ENCODE measurements at regions of chr13 and their contacts with region 1.

Region 1: GRCh38 chr13:27620377-27621115 is at the start of gene LNX2:
- DNase-seq: peak; percentile 97
- H3K4me3 Mint-ChIP-seq: peak within 1 kb of the TSS; percentile 88
- H3K27ac Mint-ChIP-seq: peak within 1 kb of the TSS; percentile 88
- H3K4me1 Mint-ChIP-seq: peaks cover 57% of the 10 kb centered on the region
- H3K27me3 Mint-ChIP-seq: no peaks in the 10 kb centered on the region
- total RNA-seq, gene LNX2: 4.1 and 4.5 TPM in 2 replicates

Region 2: GRCh38 chr13:26253787-26254582 is 1366.6 kb before region 1 on chr13 and contains the start of gene CDK8:
- intact Hi-C with region 1: loop called (anchors 5 kb)
- DNase-seq: peak; percentile 80
- H3K4me3 Mint-ChIP-seq: peak within 1 kb of the TSS; percentile 91
- H3K27ac Mint-ChIP-seq: peak within 1 kb of the TSS; percentile 88
- H3K4me1 Mint-ChIP-seq: peaks cover 25% of the 10 kb centered on the region
- H3K27me3 Mint-ChIP-seq: peaks cover 2% of the 10 kb centered on the region
- total RNA-seq, gene CDK8: 18.4 and 18.9 TPM in 2 replicates

Region 3: DNA sequence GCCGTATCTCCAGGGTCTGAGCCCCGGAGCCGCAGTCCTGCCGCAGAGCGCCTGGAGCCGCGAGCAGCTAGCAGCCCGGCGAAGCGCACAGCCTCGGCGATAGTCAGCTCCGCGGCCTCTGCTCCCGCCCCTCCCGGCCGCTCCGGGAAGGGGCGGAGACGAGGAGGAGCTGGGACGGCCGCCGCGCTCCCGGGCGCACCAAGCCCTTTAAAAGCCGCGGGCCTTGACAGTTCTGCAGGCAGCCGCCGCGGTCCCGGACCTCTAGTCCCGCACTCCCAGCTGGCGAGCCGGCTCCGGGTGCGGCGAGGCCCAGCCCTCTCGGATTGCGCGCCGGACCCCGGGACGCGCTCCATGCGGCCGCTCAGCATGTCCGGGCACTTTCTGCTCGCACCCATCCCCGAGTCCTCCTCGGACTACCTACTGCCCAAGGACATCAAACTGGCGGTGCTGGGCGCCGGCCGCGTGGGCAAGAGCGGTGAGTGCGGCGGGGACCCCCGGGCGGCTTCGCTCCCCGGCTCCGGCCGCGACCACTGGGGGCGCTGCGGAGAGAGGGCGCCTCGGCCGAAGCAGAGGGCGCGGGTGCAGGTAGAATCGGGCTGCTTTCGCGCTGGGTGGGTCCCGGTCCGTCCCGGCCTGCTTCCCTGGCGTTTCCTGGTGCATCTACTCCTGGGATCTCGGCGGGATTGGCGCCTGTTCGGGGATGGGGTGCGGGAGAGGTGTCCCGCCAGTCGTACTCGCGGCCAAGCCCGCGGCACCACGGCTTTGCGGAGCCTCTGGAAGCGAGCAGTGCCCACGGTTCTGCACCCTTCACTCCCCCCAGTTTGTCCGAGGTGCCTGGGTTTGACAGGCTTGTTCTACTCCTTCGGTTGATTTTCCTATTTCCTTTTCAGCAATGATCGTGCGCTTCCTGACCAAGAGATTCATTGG is 349.7 kb before region 1 on chr13 and contains the start of gene RASL11A:
- intact Hi-C with region 1: loop called (anchors 5 kb)
- DNase-seq: peak; percentile 63
- H3K4me3 Mint-ChIP-seq: peak within 1 kb of the TSS; percentile 89
- H3K27ac Mint-ChIP-seq: peak within 1 kb of the TSS; percentile 24
- H3K4me1 Mint-ChIP-seq: peaks cover 11% of the 10 kb centered on the region
- H3K27me3 Mint-ChIP-seq: peaks cover 40% of the 10 kb centered on the region
- total RNA-seq, gene RASL11A: 1.9 and 3.2 TPM in 2 replicates

Region 4: GRCh38 chr13:27449936-27450828 is 170.4 kb before region 1 on chr13 and contains the start of gene MTIF3:
- intact Hi-C with region 1: loop called (anchors 1 kb)
- DNase-seq: peak; percentile 95
- H3K4me3 Mint-ChIP-seq: peak within 1 kb of the TSS; percentile 91
- H3K27ac Mint-ChIP-seq: peak within 1 kb of the TSS; percentile 93
- H3K4me1 Mint-ChIP-seq: peaks cover 58% of the 10 kb centered on the region
- H3K27me3 Mint-ChIP-seq: no peaks in the 10 kb centered on the region
- total RNA-seq, gene MTIF3: 30.4 and 36.0 TPM in 2 replicates

Region 5: GRCh38 chr13:27704681-27705080 is 84.1 kb after region 1 on chr13:
- intact Hi-C with region 1: loop called (anchors 5 kb)
- DNase-seq: peak; percentile 22
- H3K4me3 Mint-ChIP-seq: peak overlapping the region; percentile 50
- H3K27ac Mint-ChIP-seq: peak overlapping the region; percentile 12
- H3K4me1 Mint-ChIP-seq: peaks cover 13% of the 10 kb centered on the region
- H3K27me3 Mint-ChIP-seq: peaks cover 27% of the 10 kb centered on the region

Region 6: DNA sequence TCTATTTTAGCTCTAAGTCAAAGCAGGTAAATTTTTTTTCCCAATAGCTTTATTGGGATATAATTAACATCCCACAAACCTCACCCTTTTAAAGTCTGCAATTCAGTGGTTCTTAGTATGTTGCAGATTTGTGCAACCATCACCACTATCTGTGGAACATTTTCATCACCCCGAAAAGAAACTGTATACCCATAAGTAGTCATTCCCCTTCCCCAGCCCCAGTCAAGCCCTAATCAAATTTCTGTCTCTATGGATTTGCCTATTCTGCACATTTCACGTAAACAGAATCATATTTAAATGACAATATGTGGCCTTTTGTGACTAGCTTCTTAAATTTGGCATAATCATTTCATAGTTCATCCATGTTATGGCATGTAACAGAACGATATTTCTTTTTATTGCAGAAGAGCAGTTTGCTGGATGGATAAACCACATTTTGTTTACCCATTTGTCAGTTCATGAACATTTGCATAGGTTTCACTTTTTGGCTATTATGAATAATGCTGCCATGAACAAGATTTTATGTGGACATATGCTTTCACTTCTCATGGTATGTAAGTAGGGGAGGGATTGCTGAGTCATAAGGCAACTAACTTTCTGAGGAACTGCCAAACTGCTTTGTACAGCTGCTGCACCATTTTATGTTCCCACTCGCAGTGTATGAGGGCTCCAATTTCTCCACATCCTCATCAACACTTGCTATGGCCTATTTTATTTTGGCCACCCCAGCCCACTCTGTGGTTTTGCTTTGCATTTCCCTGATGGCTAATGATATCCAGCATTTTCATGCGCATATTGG is 1087.3 kb after region 1 on chr13:
- intact Hi-C with region 1: loop called (anchors 5 kb)
- DNase-seq: no peak
- H3K4me3 Mint-ChIP-seq: no peak overlapping the region
- H3K27ac Mint-ChIP-seq: peak overlapping the region; percentile 6
- H3K4me1 Mint-ChIP-seq: peaks cover 12% of the 10 kb centered on the region
- H3K27me3 Mint-ChIP-seq: no peaks in the 10 kb centered on the region